ENCODE measurements at regions of chrX and their contacts with region 1.

Region 1: DNA sequence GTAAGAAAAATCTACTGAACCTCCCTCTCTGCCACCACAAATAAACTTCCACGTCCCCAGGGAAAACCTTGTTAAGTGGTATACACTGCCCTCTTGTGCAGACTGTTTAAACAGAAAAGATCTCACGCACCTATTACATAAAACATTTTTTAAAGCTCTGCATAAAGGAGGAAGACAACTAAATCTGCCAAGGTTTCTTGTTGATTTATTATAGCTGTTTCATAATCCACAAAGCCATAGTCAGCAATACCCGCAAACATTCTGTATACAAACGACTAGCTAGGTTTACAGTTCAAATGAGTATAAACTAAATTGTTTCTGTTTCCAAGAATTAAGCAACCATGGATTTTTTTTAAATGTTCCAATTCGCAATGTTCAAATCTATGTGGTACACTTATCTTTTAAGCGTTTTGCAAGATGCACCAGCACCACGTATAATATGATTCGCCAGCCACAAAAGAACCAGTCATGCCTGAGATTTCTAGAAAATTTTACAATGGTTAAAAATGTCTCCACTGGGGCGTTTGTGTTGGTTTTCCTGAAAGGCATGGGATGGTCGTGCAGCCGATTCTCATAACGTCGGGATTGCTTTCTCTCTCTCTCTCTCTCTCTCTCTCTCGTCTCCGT is 164.6 kb downstream of the PRKX start:
- DNase-seq: peak; percentile 22 to 58
- ATAC-seq: peak; percentile 57 to 71; a peak in 5 of 6 replicates
- H3K4me3 ChIP-seq: peak overlapping the region; percentile 34
- H3K27ac ChIP-seq: peak overlapping the region in 1 of 2 experiments; percentile 56; a peak in 4 of 6 replicates
- H3K4me1 ChIP-seq: no peaks in the 10 kb centered on the region
- CTCF ChIP-seq: peak; percentile 42
- EP300 ChIP-seq: no peak
- POLR2A ChIP-seq: no peak
- RAD21 ChIP-seq: peak; percentile 59 to 65

Region 2: DNA sequence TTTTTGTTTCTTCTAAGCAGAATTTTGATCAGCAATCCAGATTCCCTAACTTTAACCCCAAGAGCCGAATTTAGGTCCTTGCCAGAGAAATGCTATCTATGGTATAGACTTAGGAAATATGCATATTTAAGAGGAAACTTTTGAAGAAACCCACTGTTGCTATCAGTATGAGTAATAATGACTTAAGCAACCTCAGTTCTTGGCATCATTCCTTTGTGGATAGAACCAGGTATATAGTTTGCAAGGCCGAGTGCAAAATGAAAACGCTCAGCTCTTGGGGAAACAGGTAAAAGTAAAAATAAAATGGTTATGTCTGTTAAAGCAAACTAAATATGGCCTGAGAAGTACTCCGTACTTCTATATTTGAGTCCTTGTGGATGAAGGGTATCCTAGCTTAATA is 429.5 kb before region 1 on chrX:
- CTCF ChIA-PET with region 1: interaction called, 31 read pairs
- POLR2A ChIA-PET with region 1: no interaction called
- DNase-seq: no peak
- ATAC-seq: no peak
- H3K4me3 ChIP-seq: no peak overlapping the region
- H3K27ac ChIP-seq: no peak overlapping the region
- H3K4me1 ChIP-seq: no peaks in the 10 kb centered on the region
- CTCF ChIP-seq: no peak
- EP300 ChIP-seq: no peak
- POLR2A ChIP-seq: no peak
- RAD21 ChIP-seq: no peak

Region 3: DNA sequence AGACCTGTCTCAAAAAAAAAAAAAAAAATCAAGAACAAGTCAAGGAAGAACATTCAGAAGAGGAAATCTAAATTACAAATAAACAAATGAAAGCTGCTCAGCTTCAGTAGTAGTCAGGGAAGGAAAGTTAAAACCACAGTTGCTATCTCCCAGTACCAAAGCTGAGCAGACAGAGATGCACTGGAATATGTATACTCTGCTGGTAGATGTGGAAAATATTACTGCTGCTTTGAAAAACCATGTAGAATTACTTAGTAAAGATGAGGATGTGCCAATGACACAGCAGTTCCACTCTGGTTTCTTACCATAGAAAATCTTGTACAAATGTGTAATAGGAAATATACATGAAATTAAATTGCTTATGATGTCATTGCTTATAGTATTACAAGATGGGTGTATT is 189.6 kb after region 1 on chrX:
- CTCF ChIA-PET with region 1: no interaction called
- POLR2A ChIA-PET with region 1: no interaction called
- DNase-seq: no peak
- ATAC-seq: no peak
- H3K4me3 ChIP-seq: no peak overlapping the region
- H3K27ac ChIP-seq: no peak overlapping the region
- H3K4me1 ChIP-seq: no peaks in the 10 kb centered on the region
- CTCF ChIP-seq: no peak
- EP300 ChIP-seq: no peak
- POLR2A ChIP-seq: no peak
- RAD21 ChIP-seq: no peak